Right lobe of liver (tissue), 6 donors: ENCODE measurements at regions of chr13 and their contacts with region 1.

Region 1: DNA sequence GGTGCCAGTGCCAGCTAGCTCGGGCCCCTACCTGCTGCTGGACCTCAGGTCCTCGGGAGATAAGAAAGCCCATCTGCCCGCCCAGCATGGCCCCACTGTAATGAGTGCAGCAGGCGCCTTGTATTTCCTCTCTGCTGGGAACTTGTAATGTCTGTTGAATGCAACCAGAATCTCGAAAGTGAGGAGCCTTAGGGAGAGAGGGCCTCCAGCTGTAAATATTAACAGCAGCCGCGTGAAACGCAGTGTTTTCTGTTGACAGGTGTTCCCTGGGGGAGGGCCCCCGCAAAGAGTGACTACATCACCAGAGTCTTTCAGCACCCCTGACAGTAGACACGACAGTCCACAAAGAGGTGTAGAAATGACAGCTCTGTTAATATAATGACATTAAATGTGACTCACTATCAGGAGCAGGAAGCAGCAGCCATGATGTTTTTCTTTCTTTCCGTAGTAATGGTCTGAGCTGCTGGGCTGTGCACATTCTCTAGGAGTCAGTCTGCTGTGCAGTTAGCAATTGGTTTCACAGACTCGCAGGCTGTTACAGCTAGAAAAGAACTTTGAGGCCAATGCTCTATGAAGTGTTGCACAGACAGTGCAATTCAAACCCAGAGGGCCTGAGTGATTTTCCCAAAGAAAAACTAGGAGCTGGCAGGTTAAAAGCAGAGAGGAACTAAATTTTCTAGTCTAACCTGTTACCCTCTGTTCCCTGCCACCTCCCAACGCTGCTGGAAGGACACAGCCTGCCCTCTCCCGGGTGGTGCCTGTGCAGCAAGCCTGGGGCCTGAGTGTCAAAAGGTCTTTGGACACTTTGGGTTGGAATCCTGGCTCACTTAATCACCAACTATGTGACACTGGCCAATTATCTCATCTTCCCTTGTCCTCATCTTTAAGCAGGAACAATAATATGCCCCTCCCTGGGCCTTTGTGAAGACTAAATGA is 58.6 kb upstream of the WASF3 start:
- DNase-seq: no peak
- ATAC-seq: no peak
- H3K4me3 ChIP-seq: no peak overlapping the region
- H3K27ac ChIP-seq: no peak overlapping the region
- H3K4me1 ChIP-seq: no peaks in the 10 kb centered on the region
- H3K27me3 ChIP-seq: no peaks in the 10 kb centered on the region
- CTCF ChIP-seq: no peak
- POLR2A ChIP-seq: no peak

Region 2: DNA sequence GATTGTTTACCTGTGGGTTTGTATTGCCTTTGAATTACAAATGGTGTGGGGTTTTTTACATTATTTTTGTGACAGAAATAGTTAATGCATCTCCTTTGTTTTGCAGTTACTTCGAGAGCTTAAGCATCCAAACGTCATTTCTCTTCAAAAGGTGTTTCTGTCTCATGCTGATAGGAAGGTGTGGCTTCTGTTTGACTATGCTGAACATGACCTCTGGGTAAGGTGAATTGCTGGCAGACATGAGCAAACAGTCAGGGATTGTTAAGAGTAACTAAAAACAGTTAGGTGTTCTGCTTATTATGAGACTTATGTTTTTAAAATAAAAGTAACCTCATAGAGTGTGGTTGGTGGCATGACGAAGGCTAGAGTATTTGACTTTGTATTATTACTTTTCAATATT is 150.0 kb before region 1 on chr13:
- intact Hi-C with region 1: no loop called
- DNase-seq: no peak
- ATAC-seq: peak in 3 of 4 donors; percentile 47 to 58 (median 51)
- H3K4me3 ChIP-seq: no peak overlapping the region
- H3K27ac ChIP-seq: no peak overlapping the region
- H3K4me1 ChIP-seq: no peaks in the 10 kb centered on the region
- H3K27me3 ChIP-seq: no peaks in the 10 kb centered on the region
- CTCF ChIP-seq: no peak
- POLR2A ChIP-seq: no peak

Region 3: GRCh38 chr13:26605845-26606244 is 106.9 kb after region 1 on chr13:
- intact Hi-C with region 1: no loop called
- DNase-seq: peak in 2 of 3 donors; percentile 46 to 48
- ATAC-seq: peak; percentile 75 to 88 (median 88)
- H3K4me3 ChIP-seq: no peak overlapping the region
- H3K27ac ChIP-seq: peak overlapping the region in 2 of 3 donors; percentile 35 to 55
- H3K4me1 ChIP-seq: peaks cover 0 to 17% (median 7%) of the 10 kb centered on the region in 4 donors
- H3K27me3 ChIP-seq: no peaks in the 10 kb centered on the region
- CTCF ChIP-seq: peak; percentile 10 to 36 (median 22)
- POLR2A ChIP-seq: no peak

Region 4: GRCh38 chr13:26698392-26699196 is 199.7 kb after region 1 on chr13:
- intact Hi-C with region 1: loop called (anchors 5 kb)
- DNase-seq: peak; percentile 74 to 87 (median 83)
- ATAC-seq: peak; percentile 97 to 99 (median 99)
- H3K4me3 ChIP-seq: no peak overlapping the region
- H3K27ac ChIP-seq: no peak overlapping the region
- H3K4me1 ChIP-seq: peaks cover 0 to 5% (median 0%) of the 10 kb centered on the region in 4 donors
- H3K27me3 ChIP-seq: no peaks in the 10 kb centered on the region
- CTCF ChIP-seq: peak; percentile 97 to 99 (median 98)
- POLR2A ChIP-seq: no peak